Calu3 (cell line): ENCODE measurements at regions of chr6 and their contacts with region 1.

Region 1: GRCh38 chr6:129730477-129731165 is 20.6 kb upstream of the ARHGAP18 start:
- DNase-seq: peak; percentile 31
- H3K4me3 Mint-ChIP-seq: no peak overlapping the region
- H3K27ac Mint-ChIP-seq: peak overlapping the region; percentile 2
- H3K4me1 Mint-ChIP-seq: peaks cover 17% of the 10 kb centered on the region
- H3K27me3 Mint-ChIP-seq: no peaks in the 10 kb centered on the region
- CTCF ChIP-seq: peak; percentile 55

Region 2: GRCh38 chr6:129498950-129499842 is 231.4 kb before region 1 on chr6:
- CTCF ChIA-PET with region 1: interaction called, 5 read pairs
- intact Hi-C with region 1: loop called (anchors 2 kb)
- DNase-seq: peak; percentile 43
- H3K4me3 Mint-ChIP-seq: peak overlapping the region; percentile 61
- H3K27ac Mint-ChIP-seq: peak overlapping the region; percentile 89
- H3K4me1 Mint-ChIP-seq: peaks cover 63% of the 10 kb centered on the region
- H3K27me3 Mint-ChIP-seq: no peaks in the 10 kb centered on the region
- CTCF ChIP-seq: peak; percentile 77

Region 3: GRCh38 chr6:129598244-129599187 is 132.1 kb before region 1 on chr6:
- CTCF ChIA-PET with region 1: interaction called, 22 read pairs
- intact Hi-C with region 1: loop called (anchors 1 kb)
- DNase-seq: peak; percentile 21
- H3K4me3 Mint-ChIP-seq: no peak overlapping the region
- H3K27ac Mint-ChIP-seq: peak overlapping the region; percentile 16
- H3K4me1 Mint-ChIP-seq: no peaks in the 10 kb centered on the region
- H3K27me3 Mint-ChIP-seq: no peaks in the 10 kb centered on the region
- CTCF ChIP-seq: peak; percentile 50

Region 4: GRCh38 chr6:129609635-129610034 is 121.0 kb before region 1 on chr6:
- CTCF ChIA-PET with region 1: no interaction called
- intact Hi-C with region 1: no loop called
- DNase-seq: no peak
- H3K4me3 Mint-ChIP-seq: no peak overlapping the region
- H3K27ac Mint-ChIP-seq: no peak overlapping the region
- H3K4me1 Mint-ChIP-seq: no peaks in the 10 kb centered on the region
- H3K27me3 Mint-ChIP-seq: no peaks in the 10 kb centered on the region
- CTCF ChIP-seq: no peak

Region 5: GRCh38 chr6:129621247-129621646 is 109.4 kb before region 1 on chr6:
- CTCF ChIA-PET with region 1: no interaction called
- intact Hi-C with region 1: loop called (anchors 1 kb)
- DNase-seq: peak; percentile 54
- H3K4me3 Mint-ChIP-seq: no peak overlapping the region
- H3K27ac Mint-ChIP-seq: no peak overlapping the region
- H3K4me1 Mint-ChIP-seq: peaks cover 16% of the 10 kb centered on the region
- H3K27me3 Mint-ChIP-seq: no peaks in the 10 kb centered on the region
- CTCF ChIP-seq: peak; percentile 38

Region 6: GRCh38 chr6:129657483-129657882 is 73.1 kb before region 1 on chr6:
- CTCF ChIA-PET with region 1: no interaction called
- intact Hi-C with region 1: no loop called
- DNase-seq: no peak
- H3K4me3 Mint-ChIP-seq: no peak overlapping the region
- H3K27ac Mint-ChIP-seq: no peak overlapping the region
- H3K4me1 Mint-ChIP-seq: peaks cover 74% of the 10 kb centered on the region
- H3K27me3 Mint-ChIP-seq: no peaks in the 10 kb centered on the region
- CTCF ChIP-seq: no peak

Region 7: GRCh38 chr6:129667621-129668020 is 63.0 kb before region 1 on chr6:
- CTCF ChIA-PET with region 1: interaction called, 3 read pairs
- intact Hi-C with region 1: loop called (anchors 5 kb)
- DNase-seq: no peak
- H3K4me3 Mint-ChIP-seq: peak overlapping the region; percentile 5
- H3K27ac Mint-ChIP-seq: peak overlapping the region; percentile 11
- H3K4me1 Mint-ChIP-seq: peaks cover 62% of the 10 kb centered on the region
- H3K27me3 Mint-ChIP-seq: no peaks in the 10 kb centered on the region
- CTCF ChIP-seq: no peak

Region 8: DNA sequence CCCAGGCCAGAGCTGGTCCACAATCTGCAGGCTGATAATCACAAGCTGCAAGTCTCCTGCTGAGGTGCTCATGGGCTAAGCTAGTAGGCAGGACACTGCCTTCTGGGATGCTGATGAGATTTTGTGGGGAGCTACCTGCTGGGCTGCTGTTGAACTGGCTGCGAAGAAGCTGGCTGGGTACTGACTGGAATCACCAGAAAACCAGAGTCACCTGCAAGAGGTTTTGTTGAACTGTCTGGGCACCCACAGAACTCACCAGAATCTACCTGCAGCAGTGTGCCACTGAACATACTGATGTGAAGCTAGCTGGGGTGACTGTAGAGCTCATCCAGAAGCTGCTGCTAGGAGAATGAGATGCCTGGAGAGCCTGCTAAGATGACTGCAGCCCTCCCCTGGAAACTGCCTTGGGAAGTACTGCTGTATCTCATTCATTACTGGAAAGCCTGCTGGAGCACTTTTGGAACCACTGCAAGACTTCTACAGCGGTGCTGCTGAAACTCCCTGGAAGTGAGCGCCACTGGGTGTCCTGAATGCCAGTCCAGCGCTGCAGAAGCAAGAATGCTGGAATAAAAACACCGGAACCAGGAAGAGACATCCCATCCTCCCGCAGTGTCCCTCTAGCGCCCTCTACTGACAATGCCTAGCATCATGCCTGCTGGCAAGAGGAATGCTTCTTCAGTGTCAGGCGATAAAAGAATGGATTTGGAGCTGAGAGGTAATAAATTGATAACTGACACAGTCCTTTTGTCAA is 44.3 kb after region 1 on chr6:
- CTCF ChIA-PET with region 1: no interaction called
- intact Hi-C with region 1: no loop called
- DNase-seq: peak; percentile 76
- H3K4me3 Mint-ChIP-seq: no peak overlapping the region
- H3K27ac Mint-ChIP-seq: no peak overlapping the region
- H3K4me1 Mint-ChIP-seq: no peaks in the 10 kb centered on the region
- H3K27me3 Mint-ChIP-seq: peaks cover 29% of the 10 kb centered on the region
- CTCF ChIP-seq: peak; percentile 74

Region 9: DNA sequence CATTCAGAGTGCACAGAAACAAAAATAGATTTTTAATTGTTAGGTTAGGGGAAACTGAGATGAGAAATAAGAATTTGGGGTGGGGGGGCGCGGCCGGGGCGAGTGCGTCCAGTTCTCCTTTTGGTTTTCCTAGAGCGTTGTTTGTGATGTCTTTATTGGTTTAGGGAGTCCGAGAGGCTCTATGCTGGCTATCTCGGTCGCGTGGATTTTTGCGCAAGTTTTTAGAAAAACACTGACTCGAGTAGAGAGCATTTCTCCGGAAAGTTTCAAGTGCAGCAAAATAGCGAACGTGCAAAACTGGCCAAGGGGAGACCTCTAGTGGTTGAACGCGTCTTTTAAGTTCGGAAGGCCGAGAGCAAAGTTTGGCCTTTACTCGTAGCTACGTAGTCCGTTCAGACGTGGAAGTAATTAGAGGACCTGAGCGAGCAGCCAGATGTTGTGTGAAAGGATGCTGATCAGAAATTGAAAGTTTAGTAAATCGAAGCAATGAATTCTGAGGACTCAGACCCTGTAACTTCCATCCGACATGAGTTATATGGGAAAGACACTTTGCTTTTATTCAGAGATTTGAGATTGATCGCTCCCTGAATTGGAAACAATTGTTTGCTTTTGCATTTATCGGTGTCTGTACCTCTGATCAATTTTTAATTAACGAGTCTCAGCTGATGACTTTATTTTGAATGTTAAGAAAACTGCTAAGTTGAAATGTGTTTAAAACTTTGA is 290.4 kb after region 1 on chr6:
- CTCF ChIA-PET with region 1: no interaction called
- intact Hi-C with region 1: loop called (anchors 10 kb)
- DNase-seq: peak; percentile 82
- H3K4me3 Mint-ChIP-seq: peak overlapping the region; percentile 90
- H3K27ac Mint-ChIP-seq: peak overlapping the region; percentile 56
- H3K4me1 Mint-ChIP-seq: no peaks in the 10 kb centered on the region
- H3K27me3 Mint-ChIP-seq: no peaks in the 10 kb centered on the region
- CTCF ChIP-seq: peak; percentile 67

Region 10: DNA sequence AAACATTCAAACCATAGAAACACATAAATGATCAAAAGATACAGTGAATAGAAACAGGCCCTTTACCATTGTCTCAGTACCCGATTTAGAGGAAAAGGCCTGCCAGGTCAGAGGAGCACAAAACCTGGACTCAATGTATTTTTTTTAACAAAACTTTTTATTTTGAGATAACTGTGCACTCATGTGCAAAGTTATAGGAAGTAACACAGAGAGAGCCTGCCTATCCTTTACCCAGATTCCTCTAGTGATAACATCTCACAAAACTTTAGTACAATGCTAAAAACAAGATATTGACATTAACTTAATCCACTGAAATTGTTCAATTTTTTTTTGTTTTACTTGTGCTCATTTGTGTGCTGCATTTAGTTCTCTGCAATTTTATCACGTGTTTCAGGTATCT is 528.9 kb after region 1 on chr6:
- CTCF ChIA-PET with region 1: no interaction called
- intact Hi-C with region 1: no loop called
- DNase-seq: no peak
- H3K4me3 Mint-ChIP-seq: no peak overlapping the region
- H3K27ac Mint-ChIP-seq: no peak overlapping the region
- H3K4me1 Mint-ChIP-seq: peaks cover 12% of the 10 kb centered on the region
- H3K27me3 Mint-ChIP-seq: no peaks in the 10 kb centered on the region
- CTCF ChIP-seq: no peak